A673 (cell line): ENCODE measurements at regions of chr12 and their contacts with region 1.

Region 1: DNA sequence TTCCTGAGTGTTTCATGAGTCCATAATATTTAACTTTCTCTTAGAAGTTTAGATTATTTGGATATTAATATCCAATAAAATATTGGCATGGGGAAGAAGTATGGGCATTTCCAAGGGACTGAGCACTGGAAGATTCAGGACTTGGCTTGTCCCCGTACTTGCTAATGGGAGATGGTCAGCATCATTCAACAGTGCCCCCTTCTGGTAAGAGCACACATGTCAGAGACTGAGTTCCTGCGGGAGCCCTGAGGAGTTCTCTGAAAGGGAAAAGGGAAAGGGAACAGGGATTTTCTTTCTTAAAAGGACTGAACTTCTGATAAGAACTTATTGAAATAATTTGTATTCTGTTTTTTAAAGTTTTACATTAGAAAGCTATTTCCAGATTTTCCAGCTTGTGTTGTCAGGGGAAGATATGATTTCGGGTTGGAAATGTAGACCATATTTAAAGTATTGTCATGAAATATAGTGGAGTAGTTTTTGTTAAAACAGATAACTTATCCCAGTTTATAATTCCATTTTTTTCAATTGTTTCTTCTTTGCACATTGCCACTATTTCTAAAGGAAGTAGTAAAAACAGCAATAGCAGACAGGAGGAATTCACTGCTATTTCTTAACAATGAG is 59.8 kb upstream of the C12orf71 start:
- DNase-seq: peak; percentile 80
- H3K4me3 ChIP-seq: no peak overlapping the region
- H3K27ac ChIP-seq: no peak overlapping the region
- H3K4me1 ChIP-seq: no peaks in the 10 kb centered on the region
- H3K27me3 ChIP-seq: no peaks in the 10 kb centered on the region
- CTCF ChIP-seq: peak; percentile 94

Region 2: DNA sequence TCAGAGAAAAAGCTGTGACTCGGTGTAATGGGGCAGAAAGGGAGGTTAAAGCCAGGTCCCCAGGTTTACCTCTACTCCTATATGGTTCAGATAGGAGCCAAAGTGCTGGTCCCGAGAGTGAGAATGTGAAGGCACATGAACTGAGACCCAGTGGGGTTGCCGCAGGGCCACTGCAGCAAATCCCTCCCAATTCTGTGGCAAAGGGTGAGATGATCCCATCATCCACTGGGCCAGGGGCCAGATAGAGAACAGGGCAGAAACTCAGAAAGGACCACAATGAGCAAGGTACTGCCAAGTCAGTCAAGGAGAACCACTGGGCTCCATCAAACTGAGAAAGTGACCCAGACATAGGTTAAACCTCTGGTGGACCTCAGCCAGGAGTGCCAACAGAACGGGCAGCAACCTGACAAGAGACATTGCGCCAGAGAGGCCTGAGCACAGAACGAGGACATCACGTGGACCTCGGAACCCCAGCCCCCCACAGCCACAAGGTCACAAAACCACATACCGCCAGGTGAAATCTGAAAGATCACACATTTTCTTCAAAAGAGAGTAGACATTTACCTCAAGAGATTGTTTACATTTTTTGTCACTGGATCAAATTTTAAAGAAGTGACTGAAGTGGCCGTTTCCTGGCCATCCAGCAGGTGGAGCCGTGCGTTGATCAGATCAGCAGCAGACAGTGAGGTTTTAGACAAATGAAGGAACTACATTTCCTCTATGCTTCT is 288.7 kb before region 1 on chr12:
- CTCF ChIA-PET with region 1: no interaction called
- POLR2A ChIA-PET with region 1: no interaction called
- intact Hi-C with region 1: loop called (anchors 10 kb)
- DNase-seq: peak; percentile 66
- H3K4me3 ChIP-seq: no peak overlapping the region
- H3K27ac ChIP-seq: no peak overlapping the region
- H3K4me1 ChIP-seq: peaks cover 6% of the 10 kb centered on the region
- H3K27me3 ChIP-seq: no peaks in the 10 kb centered on the region
- CTCF ChIP-seq: peak; percentile 95

Region 3: DNA sequence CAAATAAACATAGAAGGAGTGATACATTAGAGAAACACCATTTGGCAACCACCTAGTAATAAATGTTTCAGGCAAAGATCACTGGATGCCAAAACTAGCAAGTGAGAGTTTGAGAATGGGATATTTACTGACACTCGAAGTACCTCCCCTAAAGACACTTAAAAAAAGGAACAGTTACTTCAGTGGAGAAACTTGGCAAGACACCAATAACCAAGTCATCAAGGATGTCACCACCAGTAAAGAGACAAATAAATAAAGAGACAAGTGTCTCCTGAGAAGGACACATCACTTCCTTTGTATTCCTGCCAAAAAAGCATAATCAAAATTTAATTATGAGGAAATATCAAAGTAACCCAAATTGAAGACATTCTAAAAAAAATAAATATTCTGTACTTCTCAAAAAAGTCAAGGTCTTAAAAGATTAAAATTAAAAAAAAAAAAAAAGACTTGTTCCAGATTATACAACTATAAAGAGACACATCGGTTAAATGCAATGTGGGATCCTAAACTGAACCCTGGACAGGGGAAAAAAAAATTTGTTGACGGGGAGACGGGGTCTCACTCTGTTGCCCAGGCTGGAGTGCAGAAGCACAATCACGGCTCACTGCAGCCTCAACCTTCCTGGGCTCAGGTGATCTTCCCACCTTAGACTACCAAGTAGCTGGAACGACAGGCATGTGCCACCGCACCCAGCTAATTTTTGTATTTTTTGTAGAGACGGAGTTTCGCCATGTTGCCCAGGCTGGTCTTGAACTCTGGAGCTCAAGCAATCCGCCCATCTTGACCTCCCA is 154.4 kb before region 1 on chr12:
- CTCF ChIA-PET with region 1: no interaction called
- POLR2A ChIA-PET with region 1: no interaction called
- intact Hi-C with region 1: no loop called
- DNase-seq: peak; percentile 80
- H3K4me3 ChIP-seq: no peak overlapping the region
- H3K27ac ChIP-seq: no peak overlapping the region
- H3K4me1 ChIP-seq: peaks cover 12% of the 10 kb centered on the region
- H3K27me3 ChIP-seq: no peaks in the 10 kb centered on the region
- CTCF ChIP-seq: no peak

Region 4: GRCh38 chr12:27034607-27035293 is 107.5 kb before region 1 on chr12:
- CTCF ChIA-PET with region 1: no interaction called
- POLR2A ChIA-PET with region 1: no interaction called
- intact Hi-C with region 1: loop called (anchors 5 kb)
- DNase-seq: no peak
- H3K4me3 ChIP-seq: no peak overlapping the region
- H3K27ac ChIP-seq: no peak overlapping the region
- H3K4me1 ChIP-seq: no peaks in the 10 kb centered on the region
- H3K27me3 ChIP-seq: no peaks in the 10 kb centered on the region
- CTCF ChIP-seq: no peak

Region 5: DNA sequence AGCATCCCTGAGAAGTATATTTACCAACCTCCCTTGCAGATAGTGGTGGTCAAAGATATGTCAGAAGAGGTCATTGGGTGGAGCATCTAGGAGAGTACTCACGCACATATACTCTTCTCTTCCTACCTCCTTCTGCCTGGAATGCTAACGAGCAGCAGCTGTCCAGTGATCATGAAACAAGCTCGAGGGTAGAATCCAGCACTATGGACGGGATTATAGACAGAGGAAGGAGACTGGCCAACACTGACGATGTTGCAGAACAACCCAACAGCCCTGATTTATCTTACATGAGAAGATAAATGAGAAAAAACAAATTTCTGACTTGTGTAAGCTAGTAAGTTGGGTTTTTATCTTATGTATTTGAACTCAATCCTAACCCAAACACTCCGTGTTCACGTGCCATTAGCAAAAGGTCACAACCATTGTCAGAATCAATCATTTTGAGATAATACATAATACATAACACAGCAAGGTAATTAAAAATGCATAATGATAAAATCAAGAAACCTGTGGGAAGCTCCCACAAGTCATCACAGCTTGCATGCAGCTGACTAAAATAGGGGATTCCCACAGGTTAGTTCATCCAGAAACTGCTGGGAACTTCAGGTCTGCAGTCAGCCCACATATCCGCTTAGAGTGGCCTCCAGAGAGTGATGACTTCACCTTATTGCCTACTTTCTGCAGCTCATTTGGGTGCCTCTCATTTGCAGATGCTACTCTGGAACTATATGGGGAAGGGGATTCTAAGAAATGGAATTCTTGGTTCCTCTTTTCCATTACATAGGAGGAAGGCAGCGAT is 65.6 kb after region 1 on chr12:
- CTCF ChIA-PET with region 1: no interaction called
- POLR2A ChIA-PET with region 1: no interaction called
- intact Hi-C with region 1: loop called (anchors 10 kb)
- DNase-seq: no peak
- H3K4me3 ChIP-seq: no peak overlapping the region
- H3K27ac ChIP-seq: no peak overlapping the region
- H3K4me1 ChIP-seq: no peaks in the 10 kb centered on the region
- H3K27me3 ChIP-seq: no peaks in the 10 kb centered on the region
- CTCF ChIP-seq: no peak